ENCODE measurements at regions of chr19 and their contacts with region 1.

Region 1: GRCh38 chr19:10565567-10566407 is at the start of gene KRI1:
- DNase-seq: peak; percentile 98 to 100
- ATAC-seq: peak; percentile 38 to 71 (median 51)
- H3K4me3 ChIP-seq: peak within 1 kb of the TSS; percentile 99
- H3K4me3 Mint-ChIP-seq: peak within 1 kb of the TSS; percentile 96
- H3K27ac ChIP-seq: peak within 1 kb of the TSS; percentile 93
- H3K27ac Mint-ChIP-seq: peak within 1 kb of the TSS; percentile 93 to 100
- H3K4me1 ChIP-seq: peaks cover 40% of the 10 kb centered on the region
- H3K4me1 Mint-ChIP-seq: peaks cover 47 to 62% of the 10 kb centered on the region in 2 donors
- H3K27me3 ChIP-seq: no peaks in the 10 kb centered on the region
- H3K27me3 Mint-ChIP-seq: no peaks in the 10 kb centered on the region
- CTCF ChIP-seq: no peak
- total RNA-seq, gene KRI1: 36.6 to 53.0 (median 49.5) TPM

Region 2: GRCh38 chr19:10408511-10409283 is 157.1 kb before region 1 on chr19:
- intact Hi-C with region 1: loop called (anchors 2 kb)
- DNase-seq: peak; percentile 64 to 75
- ATAC-seq: peak; percentile 46 to 69 (median 59)
- H3K4me3 ChIP-seq: no peak overlapping the region
- H3K4me3 Mint-ChIP-seq: peak overlapping the region; percentile 88
- H3K27ac ChIP-seq: peak overlapping the region; percentile 73
- H3K27ac Mint-ChIP-seq: peak overlapping the region; percentile 97 to 98
- H3K4me1 ChIP-seq: peaks cover 93% of the 10 kb centered on the region
- H3K4me1 Mint-ChIP-seq: peaks cover 66 to 81% of the 10 kb centered on the region in 2 donors
- H3K27me3 ChIP-seq: no peaks in the 10 kb centered on the region
- H3K27me3 Mint-ChIP-seq: no peaks in the 10 kb centered on the region
- CTCF ChIP-seq: no peak

Region 3: GRCh38 chr19:10502524-10503001 is 63.2 kb before region 1 on chr19:
- intact Hi-C with region 1: loop called (anchors 2 kb)
- DNase-seq: peak; percentile 91 to 92
- ATAC-seq: peak; percentile 82 to 95 (median 86)
- H3K4me3 ChIP-seq: peak overlapping the region; percentile 99
- H3K4me3 Mint-ChIP-seq: peak overlapping the region; percentile 88
- H3K27ac ChIP-seq: peak overlapping the region; percentile 98
- H3K27ac Mint-ChIP-seq: peak overlapping the region; percentile 84 to 96
- H3K4me1 ChIP-seq: peaks cover 61% of the 10 kb centered on the region
- H3K4me1 Mint-ChIP-seq: peaks cover 34 to 53% of the 10 kb centered on the region in 2 donors
- H3K27me3 ChIP-seq: no peaks in the 10 kb centered on the region
- H3K27me3 Mint-ChIP-seq: no peaks in the 10 kb centered on the region
- CTCF ChIP-seq: peak; percentile 30

Region 4: DNA sequence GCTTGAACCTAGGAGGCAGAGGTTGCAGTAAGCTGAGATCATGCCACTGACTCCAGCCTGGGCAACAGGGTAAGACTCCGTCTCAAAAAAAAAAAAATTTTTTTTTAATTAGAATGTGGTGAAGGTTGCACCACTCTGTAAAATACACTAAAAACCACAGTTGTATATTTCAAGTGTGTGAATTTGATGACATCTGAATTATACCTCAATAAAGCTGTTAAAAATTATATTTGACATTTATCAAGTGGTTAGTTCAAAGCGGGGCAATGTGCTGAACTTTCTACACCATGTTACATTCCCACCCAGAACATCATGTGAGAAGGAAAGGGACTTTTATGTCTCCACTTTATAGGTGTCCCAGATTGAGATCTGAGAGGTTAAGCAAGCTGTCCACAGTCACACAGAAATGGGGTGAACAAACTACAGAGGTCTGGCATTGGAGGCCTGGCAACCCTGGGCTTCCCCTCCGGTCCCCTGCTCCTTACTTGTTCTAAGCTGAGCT is 42.6 kb before region 1 on chr19:
- intact Hi-C with region 1: loop called (anchors 1 kb)
- DNase-seq: peak; percentile 57 to 82
- ATAC-seq: peak; percentile 65 to 88 (median 80)
- H3K4me3 ChIP-seq: no peak overlapping the region
- H3K4me3 Mint-ChIP-seq: peak overlapping the region; percentile 76
- H3K27ac ChIP-seq: peak overlapping the region; percentile 92
- H3K27ac Mint-ChIP-seq: peak overlapping the region; percentile 86 to 91
- H3K4me1 ChIP-seq: peaks cover 65% of the 10 kb centered on the region
- H3K4me1 Mint-ChIP-seq: peaks cover 41 to 42% of the 10 kb centered on the region in 2 donors
- H3K27me3 ChIP-seq: no peaks in the 10 kb centered on the region
- H3K27me3 Mint-ChIP-seq: no peaks in the 10 kb centered on the region
- CTCF ChIP-seq: no peak

Region 5: DNA sequence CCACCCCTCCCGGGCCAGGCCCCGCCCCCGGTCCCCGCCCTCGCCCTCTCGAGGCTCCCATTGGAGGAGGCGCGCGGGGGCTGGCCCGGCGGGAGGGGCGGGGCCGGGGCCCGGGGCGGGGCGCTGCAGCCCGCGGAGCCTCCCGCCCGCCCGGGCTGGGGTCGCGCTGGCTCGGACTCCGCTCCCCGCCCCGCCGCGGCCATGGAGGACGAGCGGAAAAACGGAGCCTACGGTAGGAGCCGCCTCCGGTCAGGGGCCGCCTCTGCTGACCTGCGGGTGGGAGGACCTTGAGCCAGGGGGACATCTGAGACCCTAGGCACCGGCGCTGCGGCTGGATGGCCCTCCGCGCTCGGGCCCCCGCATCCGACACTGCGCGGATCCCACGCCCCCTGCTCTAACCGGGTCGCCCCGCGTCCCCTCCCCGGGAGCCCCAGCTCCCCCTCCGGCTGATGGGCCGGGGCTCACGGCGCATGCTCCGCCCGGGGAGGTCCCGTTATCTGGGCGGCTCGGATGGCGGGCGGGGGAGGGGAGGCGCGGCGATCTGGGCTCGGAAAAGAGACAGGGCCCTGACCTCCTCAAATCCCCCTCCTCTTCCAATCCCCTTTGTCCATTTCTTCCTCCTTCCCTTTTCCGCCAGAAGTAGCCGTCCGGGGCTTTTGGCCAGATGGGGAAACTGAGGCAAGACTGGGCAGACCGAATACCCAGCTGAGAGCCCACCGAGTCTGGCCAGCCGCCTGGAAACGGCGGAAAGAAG is 36.7 kb after region 1 on chr19:
- intact Hi-C with region 1: loop called (anchors 2 kb)
- DNase-seq: peak; percentile 84 to 90
- ATAC-seq: peak; percentile 80 to 95 (median 85)
- H3K4me3 ChIP-seq: peak overlapping the region; percentile 95
- H3K4me3 Mint-ChIP-seq: peak overlapping the region; percentile 97
- H3K27ac ChIP-seq: peak overlapping the region; percentile 99
- H3K27ac Mint-ChIP-seq: peak overlapping the region; percentile 95 to 98
- H3K4me1 ChIP-seq: peaks cover 59% of the 10 kb centered on the region
- H3K4me1 Mint-ChIP-seq: peaks cover 20 to 25% of the 10 kb centered on the region in 2 donors
- H3K27me3 ChIP-seq: no peaks in the 10 kb centered on the region
- H3K27me3 Mint-ChIP-seq: no peaks in the 10 kb centered on the region
- CTCF ChIP-seq: no peak

Region 6: GRCh38 chr19:10636304-10636972 is 70.7 kb after region 1 on chr19:
- intact Hi-C with region 1: no loop called
- DNase-seq: no peak
- ATAC-seq: no peak
- H3K4me3 ChIP-seq: no peak overlapping the region
- H3K4me3 Mint-ChIP-seq: no peak overlapping the region
- H3K27ac ChIP-seq: no peak overlapping the region
- H3K27ac Mint-ChIP-seq: peak overlapping the region; percentile 7 to 73
- H3K4me1 ChIP-seq: peaks cover 17% of the 10 kb centered on the region
- H3K4me1 Mint-ChIP-seq: peaks cover 12 to 26% of the 10 kb centered on the region in 2 donors
- H3K27me3 ChIP-seq: no peaks in the 10 kb centered on the region
- H3K27me3 Mint-ChIP-seq: no peaks in the 10 kb centered on the region
- CTCF ChIP-seq: no peak

Measured in natural killer cell (primary cell).